ENCODE measurements at regions of chr10 and their contacts with region 1.

Region 1: DNA sequence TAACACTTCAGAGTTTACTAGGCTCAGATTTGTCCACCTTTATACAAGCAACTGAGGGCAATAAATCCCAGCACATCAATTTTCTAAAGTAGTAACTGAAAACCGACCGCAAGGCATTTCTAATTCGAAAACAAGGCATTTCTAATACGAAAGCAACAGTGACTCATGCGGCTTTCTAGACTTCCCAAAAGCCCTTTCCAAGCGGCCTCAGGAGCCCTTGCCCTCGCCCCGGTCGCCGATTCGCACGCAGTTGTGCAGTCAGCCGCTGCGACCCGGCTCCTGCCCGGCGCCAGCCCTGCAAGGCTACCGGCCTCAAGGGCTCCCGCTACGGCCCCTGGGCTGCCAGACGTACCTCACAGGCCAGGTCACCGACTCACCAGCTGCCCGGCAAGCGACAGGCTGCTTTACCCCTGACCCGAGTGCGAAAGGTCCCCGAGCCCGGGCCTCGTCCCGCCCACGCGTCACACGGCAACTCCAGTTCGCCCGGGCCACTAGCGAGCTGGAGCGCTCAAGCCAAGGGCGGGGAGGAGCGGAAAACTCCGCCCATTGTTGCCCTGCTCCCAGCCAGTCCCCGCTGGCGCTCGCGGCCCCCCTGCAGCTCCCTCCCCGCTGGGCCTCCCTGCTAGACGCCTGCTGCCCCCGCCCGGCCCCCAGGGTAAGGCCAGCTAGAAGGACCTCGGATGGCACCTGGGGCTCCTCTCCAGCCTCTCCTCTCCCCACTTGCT is 7.3 kb downstream of the NCOA4 start:
- DNase-seq: peak; percentile 80
- H3K4me3 Mint-ChIP-seq: peak overlapping the region; percentile 79
- H3K27ac Mint-ChIP-seq: peak overlapping the region; percentile 74
- H3K4me1 Mint-ChIP-seq: peaks cover 70% of the 10 kb centered on the region
- H3K27me3 Mint-ChIP-seq: no peaks in the 10 kb centered on the region

Region 2: DNA sequence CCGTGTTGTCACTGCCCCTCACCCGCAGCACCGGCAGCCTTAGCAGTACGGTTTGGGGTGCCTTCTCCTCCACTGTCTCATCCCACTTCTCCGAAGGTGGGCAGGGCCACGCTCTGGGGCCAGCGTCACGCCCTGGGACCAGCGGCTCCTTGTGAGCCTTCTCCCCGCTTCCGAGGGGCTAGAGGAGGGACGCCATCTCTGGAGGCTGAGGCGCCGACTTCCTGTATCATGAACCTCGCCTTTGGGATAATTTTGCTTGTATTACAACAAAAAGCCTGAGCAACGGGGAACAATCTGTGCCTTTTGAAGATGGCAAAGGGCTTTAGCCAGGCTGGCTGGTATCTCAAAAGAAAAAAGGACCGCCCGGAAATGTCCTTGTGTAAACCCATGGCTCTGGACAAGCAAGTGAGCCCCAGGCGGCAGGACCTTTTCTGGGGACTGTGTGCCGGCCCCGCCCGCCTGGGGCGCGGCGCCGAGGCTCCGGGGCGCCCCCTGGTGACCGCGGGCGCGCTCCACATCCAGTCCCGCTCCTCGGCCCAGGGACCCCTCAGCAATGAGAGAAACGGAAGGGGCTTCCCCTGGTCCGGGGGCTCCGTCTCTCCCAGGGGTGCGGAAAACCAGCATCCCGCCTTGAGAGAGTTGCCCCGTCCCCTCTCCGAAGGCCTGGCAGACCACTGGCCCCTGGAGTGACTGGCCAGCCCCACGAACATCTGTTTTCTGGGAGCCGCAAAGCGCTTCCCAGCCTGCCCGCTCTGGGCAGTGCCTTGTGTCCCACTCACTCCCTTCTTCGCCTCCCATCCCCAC is 1048.3 kb before region 1 on chr10:
- intact Hi-C with region 1: loop called (anchors 10 kb)
- DNase-seq: peak; percentile 66
- H3K4me3 Mint-ChIP-seq: peak overlapping the region; percentile 75
- H3K27ac Mint-ChIP-seq: peak overlapping the region; percentile 40
- H3K4me1 Mint-ChIP-seq: peaks cover 35% of the 10 kb centered on the region
- H3K27me3 Mint-ChIP-seq: no peaks in the 10 kb centered on the region

Region 3: GRCh38 chr10:45373576-45374349 is 649.4 kb before region 1 on chr10 and contains the start of gene ALOX5:
- intact Hi-C with region 1: loop called (anchors 10 kb)
- DNase-seq: peak; percentile 48
- H3K4me3 Mint-ChIP-seq: peak within 1 kb of the TSS; percentile 87
- H3K27ac Mint-ChIP-seq: peak within 1 kb of the TSS; percentile 67
- H3K4me1 Mint-ChIP-seq: peaks cover 37% of the 10 kb centered on the region
- H3K27me3 Mint-ChIP-seq: peaks cover 59% of the 10 kb centered on the region
- total RNA-seq, gene ALOX5: 2.9 and 3.1 TPM in 2 replicates

Region 4: DNA sequence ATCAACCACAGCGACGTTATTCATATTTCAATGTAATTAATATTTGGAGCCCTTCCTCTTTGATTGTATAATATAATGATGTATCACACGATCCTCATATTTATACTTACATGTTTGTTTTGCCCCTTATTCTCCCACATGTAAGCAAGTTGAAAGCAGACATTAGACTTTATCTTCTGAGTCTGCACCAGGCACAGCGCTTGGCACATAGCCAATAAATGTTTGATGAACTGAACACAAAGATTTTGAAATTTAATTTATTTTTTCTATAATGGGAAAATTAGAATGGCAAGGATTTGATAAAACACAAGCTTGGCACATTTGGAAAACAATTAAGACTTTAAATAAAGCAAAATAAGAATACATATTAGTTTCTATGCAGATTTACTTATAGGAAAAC is 382.2 kb before region 1 on chr10:
- intact Hi-C with region 1: no loop called
- DNase-seq: no peak
- H3K4me3 Mint-ChIP-seq: no peak overlapping the region
- H3K27ac Mint-ChIP-seq: no peak overlapping the region
- H3K4me1 Mint-ChIP-seq: no peaks in the 10 kb centered on the region
- H3K27me3 Mint-ChIP-seq: no peaks in the 10 kb centered on the region

Region 5: GRCh38 chr10:45672181-45673073 is 350.7 kb before region 1 on chr10 and contains the start of gene ZFAND4:
- intact Hi-C with region 1: loop called (anchors 5 kb)
- DNase-seq: peak; percentile 94
- H3K4me3 Mint-ChIP-seq: peak within 1 kb of the TSS; percentile 87
- H3K27ac Mint-ChIP-seq: peak within 1 kb of the TSS; percentile 79
- H3K4me1 Mint-ChIP-seq: peaks cover 30% of the 10 kb centered on the region
- H3K27me3 Mint-ChIP-seq: no peaks in the 10 kb centered on the region
- total RNA-seq, gene ZFAND4: 11.1 and 11.5 TPM in 2 replicates

Region 6: GRCh38 chr10:46284293-46285229 is 261.4 kb after region 1 on chr10:
- intact Hi-C with region 1: loop called (anchors 2 kb)
- DNase-seq: peak; percentile 83
- H3K4me3 Mint-ChIP-seq: peak overlapping the region; percentile 82
- H3K27ac Mint-ChIP-seq: peak overlapping the region; percentile 56
- H3K4me1 Mint-ChIP-seq: peaks cover 33% of the 10 kb centered on the region
- H3K27me3 Mint-ChIP-seq: peaks cover 20% of the 10 kb centered on the region

Measured in activated T-helper 1 cell treated with anti-CD3 and anti-CD28 coated beads, Interleukin-12 subunit alpha, Interleukin-12 subunit beta, Interleukin-2, Interleukin-4 antibody, amounts not matched to agents 30 ng/mL and 10 ng/mL and 1 ng/mL, durations not matched to agents 14 hours and 24 hours and 36 hours (primary cell).